ENCODE measurements at regions of chr2 and their contacts with region 1.

Region 1: GRCh38 chr2:69643602-69644505 is at the start of gene AAK1:
- DNase-seq: peak; percentile 93
- H3K4me3 ChIP-seq: peak within 1 kb of the TSS; percentile 86 to 97 (median 89)
- H3K27ac ChIP-seq: peak within 1 kb of the TSS; percentile 88
- H3K4me1 ChIP-seq: peaks cover 35% of the 10 kb centered on the region
- H3K27me3 ChIP-seq: no peaks in the 10 kb centered on the region
- CTCF ChIP-seq: no peak
- POLR2A ChIP-seq: peak; percentile 62
- total RNA-seq, gene AAK1: 116 and 127 TPM in 2 replicates

Region 2: DNA sequence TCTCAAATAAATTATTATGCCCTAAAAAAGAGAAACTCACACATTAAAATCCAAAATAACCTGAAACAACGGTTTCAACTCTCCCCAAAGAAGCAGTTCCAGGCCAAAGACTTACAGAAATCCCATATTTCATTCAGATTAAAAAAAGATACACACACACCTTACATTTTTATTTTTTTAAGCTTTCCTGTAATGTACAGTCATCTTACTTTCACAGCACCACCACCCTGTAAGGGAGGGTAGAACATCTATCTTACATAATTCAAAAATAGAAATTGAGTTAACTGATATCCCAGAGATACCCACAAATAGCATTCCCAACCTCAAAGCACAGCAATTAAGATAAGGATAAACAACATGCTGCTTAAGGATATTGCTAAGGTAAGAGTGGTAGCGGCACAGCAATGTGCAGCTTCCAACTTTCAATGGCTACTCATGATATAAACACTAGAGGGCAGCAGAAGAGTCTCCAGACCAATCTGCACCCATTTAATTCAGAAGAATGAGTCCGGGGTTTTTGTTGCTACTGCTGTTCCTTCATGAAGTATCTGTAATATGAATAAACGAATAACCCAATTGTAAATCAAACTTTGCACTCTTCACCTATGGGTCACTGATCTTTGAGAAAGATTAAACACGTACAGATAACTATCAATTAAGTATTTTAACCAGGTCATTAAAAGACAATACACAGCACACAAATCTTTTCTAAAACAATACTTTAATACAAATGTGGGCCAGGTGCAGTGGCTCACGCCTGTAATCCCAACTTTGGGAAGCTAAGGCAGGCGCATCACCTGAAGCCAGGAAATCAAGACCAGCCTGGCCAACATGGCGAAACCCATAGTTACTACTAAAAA is 268.1 kb before region 1 on chr2:
- CTCF ChIA-PET with region 1: no interaction called
- POLR2A ChIA-PET with region 1: interaction called, 12 read pairs
- dilution Hi-C with region 1: no loop called
- intact Hi-C with region 1: no loop called
- DNase-seq: peak; percentile 40
- H3K4me3 ChIP-seq: no peak overlapping the region
- H3K27ac ChIP-seq: no peak overlapping the region
- H3K4me1 ChIP-seq: no peaks in the 10 kb centered on the region
- H3K27me3 ChIP-seq: no peaks in the 10 kb centered on the region
- CTCF ChIP-seq: peak; percentile 39 to 47
- POLR2A ChIP-seq: no peak

Region 3: GRCh38 chr2:69565431-69565839 is 78.4 kb before region 1 on chr2:
- CTCF ChIA-PET with region 1: interaction called, 24 read pairs
- POLR2A ChIA-PET with region 1: no interaction called
- dilution Hi-C with region 1: no loop called
- intact Hi-C with region 1: no loop called
- DNase-seq: peak; percentile 47
- H3K4me3 ChIP-seq: no peak overlapping the region
- H3K27ac ChIP-seq: no peak overlapping the region
- H3K4me1 ChIP-seq: peaks cover 5% of the 10 kb centered on the region
- H3K27me3 ChIP-seq: no peaks in the 10 kb centered on the region
- CTCF ChIP-seq: peak; percentile 82 to 86
- POLR2A ChIP-seq: no peak

Region 4: DNA sequence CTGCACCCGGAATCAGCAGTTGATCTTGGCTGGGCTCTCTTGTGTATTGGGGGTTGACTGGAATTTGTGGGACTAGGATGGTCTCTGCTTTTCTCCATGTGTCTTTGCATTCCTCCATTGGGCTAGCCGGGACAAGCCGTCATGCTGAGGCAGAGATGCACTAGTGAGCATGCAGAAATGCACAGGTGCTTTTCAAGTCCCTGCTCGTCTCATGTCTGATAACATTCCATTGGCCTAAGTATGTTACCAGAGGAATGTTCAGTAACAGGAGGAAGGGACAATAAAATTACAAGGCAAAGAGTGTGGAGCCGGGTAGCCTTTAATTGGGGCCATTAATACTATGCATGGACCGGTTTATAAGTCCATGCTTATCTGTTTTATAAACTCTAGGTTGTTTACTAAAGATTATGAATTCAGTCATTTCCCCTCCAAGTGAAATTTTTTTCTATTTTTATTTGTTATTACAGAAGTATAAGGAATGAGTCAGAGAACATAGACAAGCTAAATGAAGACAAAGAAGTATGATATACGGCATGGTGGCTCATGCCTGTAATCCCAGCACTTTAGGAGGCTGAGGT is 24.0 kb after region 1 on chr2:
- CTCF ChIA-PET with region 1: interaction called, 5 read pairs
- POLR2A ChIA-PET with region 1: no interaction called
- dilution Hi-C with region 1: no loop called
- intact Hi-C with region 1: loop called (anchors 2 kb)
- DNase-seq: peak; percentile 88
- H3K4me3 ChIP-seq: peak overlapping the region in 1 of 3 experiments; percentile 26
- H3K27ac ChIP-seq: peak overlapping the region; percentile 83
- H3K4me1 ChIP-seq: peaks cover 17% of the 10 kb centered on the region
- H3K27me3 ChIP-seq: no peaks in the 10 kb centered on the region
- CTCF ChIP-seq: no peak
- POLR2A ChIP-seq: no peak

Region 5: GRCh38 chr2:69715964-69716363 is 72.1 kb after region 1 on chr2:
- CTCF ChIA-PET with region 1: interaction called, 6 read pairs
- POLR2A ChIA-PET with region 1: no interaction called
- dilution Hi-C with region 1: no loop called
- intact Hi-C with region 1: loop called (anchors 1 kb)
- DNase-seq: no peak
- H3K4me3 ChIP-seq: no peak overlapping the region
- H3K27ac ChIP-seq: no peak overlapping the region
- H3K4me1 ChIP-seq: no peaks in the 10 kb centered on the region
- H3K27me3 ChIP-seq: no peaks in the 10 kb centered on the region
- CTCF ChIP-seq: no peak
- POLR2A ChIP-seq: no peak

Measured in endothelial cell of umbilical vein (primary cell).